ENCODE measurements at regions of chr19 and their contacts with region 1.

Region 1: GRCh38 chr19:12938234-12939025 is at the start of gene CALR:
- DNase-seq: peak; percentile 100
- ATAC-seq: peak; percentile 91
- H3K4me3 Mint-ChIP-seq: peak within 1 kb of the TSS; percentile 99
- H3K27ac Mint-ChIP-seq: peak within 1 kb of the TSS; percentile 97
- H3K4me1 Mint-ChIP-seq: peaks cover 63% of the 10 kb centered on the region
- H3K27me3 Mint-ChIP-seq: no peaks in the 10 kb centered on the region
- total RNA-seq, gene CALR: 875 to 886 TPM

Region 2: GRCh38 chr19:12890787-12891552 is 47.5 kb before region 1 on chr19 and contains the start of gene GCDH:
- CTCF ChIA-PET with region 1: interaction called, 27 read pairs
- POLR2A ChIA-PET with region 1: interaction called, 17 read pairs
- DNase-seq: peak; percentile 99
- ATAC-seq: peak; percentile 96
- H3K4me3 Mint-ChIP-seq: peak within 1 kb of the TSS; percentile 95
- H3K27ac Mint-ChIP-seq: peak within 1 kb of the TSS; percentile 91
- H3K4me1 Mint-ChIP-seq: peaks cover 35% of the 10 kb centered on the region
- H3K27me3 Mint-ChIP-seq: peaks cover 3% of the 10 kb centered on the region
- total RNA-seq, gene GCDH: 39.5 to 42.5 TPM

Region 3: DNA sequence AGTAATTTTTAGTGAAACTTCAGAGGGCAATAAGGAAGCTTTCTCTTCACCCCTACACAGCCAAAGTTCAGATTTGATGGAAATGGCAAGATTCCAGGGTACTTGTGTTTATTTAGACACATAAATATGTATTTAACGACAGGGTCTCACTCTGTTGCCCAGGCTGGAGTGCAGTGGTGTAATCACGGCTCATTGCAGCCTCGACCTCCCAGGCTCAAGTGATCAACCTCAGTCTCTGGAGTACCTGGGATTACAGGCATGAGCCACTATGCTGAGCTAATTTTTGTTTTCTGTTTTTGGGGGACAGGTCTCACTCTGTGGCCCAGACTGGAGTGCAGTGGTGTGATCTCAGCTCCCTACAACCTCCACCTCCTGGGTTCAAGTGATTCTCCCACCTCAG is 17.4 kb before region 1 on chr19:
- CTCF ChIA-PET with region 1: no interaction called
- POLR2A ChIA-PET with region 1: interaction called, 20 read pairs
- DNase-seq: no peak
- ATAC-seq: no peak
- H3K4me3 Mint-ChIP-seq: no peak overlapping the region
- H3K27ac Mint-ChIP-seq: peak overlapping the region; percentile 14
- H3K4me1 Mint-ChIP-seq: peaks cover 24% of the 10 kb centered on the region
- H3K27me3 Mint-ChIP-seq: peaks cover 2% of the 10 kb centered on the region

Measured in activated CD8-positive, alpha-beta T cell treated with anti-CD3 and anti-CD28 coated beads, Interleukin-2, amount 10 ng/mL, durations not matched to agents 7 days and 5 days (primary cell).